Thyroid gland (tissue), 4 donors: ENCODE measurements at regions of chr2 and their contacts with region 1.

Region 1: GRCh38 chr2:26244309-26245121 is at the starts of genes HADHA and HADHB:
- DNase-seq: peak; percentile 93
- H3K4me3 ChIP-seq: peak within 1 kb of the TSS; percentile 81 to 93 (median 82)
- H3K27ac ChIP-seq: peak within 1 kb of the TSS; percentile 95 to 98 (median 98)
- H3K4me1 ChIP-seq: peaks cover 16 to 41% of the 10 kb centered on the region in 2 donors
- H3K27me3 ChIP-seq: no peaks in the 10 kb centered on the region
- CTCF ChIP-seq: peak in 1 of 6 experiments; percentile 38
- POLR2A ChIP-seq: peak; percentile 37 to 87
- total RNA-seq, gene HADHA: 113 to 149 (median 140) TPM
- total RNA-seq, gene HADHB: 127 to 200 (median 184) TPM

Region 2: DNA sequence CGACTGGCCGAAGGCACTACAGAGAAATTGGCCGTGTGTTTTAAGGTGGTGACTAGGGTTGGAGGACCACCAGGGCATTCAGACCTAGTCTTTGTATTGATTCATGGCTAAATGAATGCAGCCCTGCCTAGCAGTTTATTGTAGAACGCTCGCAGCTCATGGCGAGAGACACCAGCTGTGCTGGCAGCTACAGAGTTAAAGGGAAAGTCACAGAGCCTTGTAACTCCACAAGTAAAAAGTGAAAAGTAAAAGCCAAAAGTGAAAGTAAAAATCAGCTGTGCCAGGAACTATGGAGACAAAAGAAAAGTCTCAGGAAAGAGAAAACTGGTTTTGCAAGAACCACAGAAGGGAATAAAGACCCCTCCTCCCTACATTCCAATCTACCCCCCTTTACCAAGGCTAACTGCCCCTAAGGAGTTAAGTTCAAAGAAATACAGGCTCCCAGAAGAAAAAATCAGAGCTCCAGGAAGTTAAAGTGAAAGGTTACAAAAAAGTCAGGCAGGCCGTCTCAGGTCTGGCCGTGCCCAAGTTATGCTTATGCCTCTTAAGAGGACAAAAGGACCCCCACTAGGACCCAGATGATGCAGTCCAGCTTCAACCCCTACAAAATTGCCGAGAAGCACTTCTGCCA is 55.1 kb after region 1 on chr2:
- intact Hi-C with region 1: loop called (anchors 10 kb)
- DNase-seq: peak; percentile 73 to 76
- H3K4me3 ChIP-seq: peak overlapping the region; percentile 31 to 66 (median 47)
- H3K27ac ChIP-seq: peak overlapping the region; percentile 87 to 91 (median 88)
- H3K4me1 ChIP-seq: peaks cover 12 to 26% of the 10 kb centered on the region in 2 donors
- H3K27me3 ChIP-seq: no peaks in the 10 kb centered on the region
- CTCF ChIP-seq: no peak
- POLR2A ChIP-seq: peak in 1 of 2 donors; percentile 5